ENCODE measurements at regions of chr4 and their contacts with region 1.

Region 1: GRCh38 chr4:40283968-40284367 is 51.2 kb upstream of the CHRNA9 start:
- DNase-seq: peak; percentile 94
- H3K4me3 Mint-ChIP-seq: peak overlapping the region; percentile 19
- H3K27ac Mint-ChIP-seq: peak overlapping the region; percentile 94
- H3K4me1 Mint-ChIP-seq: peaks cover 70% of the 10 kb centered on the region
- H3K27me3 Mint-ChIP-seq: no peaks in the 10 kb centered on the region

Region 2: GRCh38 chr4:39834269-39834668 is 449.7 kb before region 1 on chr4:
- CTCF ChIA-PET with region 1: no interaction called
- intact Hi-C with region 1: no loop called
- DNase-seq: no peak
- H3K4me3 Mint-ChIP-seq: no peak overlapping the region
- H3K27ac Mint-ChIP-seq: no peak overlapping the region
- H3K4me1 Mint-ChIP-seq: no peaks in the 10 kb centered on the region
- H3K27me3 Mint-ChIP-seq: no peaks in the 10 kb centered on the region

Region 3: GRCh38 chr4:40121515-40121914 is 162.5 kb before region 1 on chr4:
- CTCF ChIA-PET with region 1: no interaction called
- intact Hi-C with region 1: no loop called
- DNase-seq: peak; percentile 51
- H3K4me3 Mint-ChIP-seq: no peak overlapping the region
- H3K27ac Mint-ChIP-seq: peak overlapping the region; percentile 61
- H3K4me1 Mint-ChIP-seq: peaks cover 46% of the 10 kb centered on the region
- H3K27me3 Mint-ChIP-seq: no peaks in the 10 kb centered on the region

Region 4: DNA sequence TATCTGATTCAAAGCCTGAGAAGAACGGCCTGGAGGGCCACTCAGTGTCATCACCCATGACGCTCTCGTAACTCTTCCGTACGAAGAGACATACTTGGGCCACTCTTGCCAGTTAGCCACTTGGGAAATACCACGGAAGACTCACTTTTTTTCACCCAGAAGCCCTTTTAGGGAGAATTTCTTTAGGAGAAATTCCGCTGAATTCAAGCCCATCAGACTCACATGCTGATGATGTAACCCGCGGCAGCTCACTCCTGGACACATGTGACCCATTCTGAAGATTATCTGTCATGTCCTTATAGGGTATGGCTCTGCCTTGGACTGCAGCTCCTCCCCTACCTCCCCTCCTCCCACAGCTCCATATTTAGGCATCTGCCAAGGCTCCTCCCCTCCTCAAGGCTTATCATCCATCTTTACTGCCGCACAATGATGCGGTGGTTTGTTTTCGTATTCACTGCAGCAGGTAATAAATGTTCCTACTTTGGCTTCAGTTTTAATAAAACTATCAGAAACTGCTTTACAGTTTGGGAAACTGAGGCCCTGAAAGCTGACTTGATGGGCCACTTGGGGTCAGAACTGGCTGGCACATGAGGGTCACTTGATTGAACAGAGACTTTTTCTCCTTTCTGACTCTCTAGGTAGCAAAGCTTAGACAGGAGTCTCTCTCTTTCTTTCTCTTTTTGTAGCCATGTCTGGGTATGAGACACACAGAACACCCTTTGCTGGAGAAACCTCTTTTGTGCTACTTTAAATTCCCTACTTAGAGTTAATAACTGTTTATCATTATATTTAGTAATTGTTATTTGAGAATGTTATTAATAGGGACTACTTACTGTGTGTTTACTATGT is 45.0 kb before region 1 on chr4:
- CTCF ChIA-PET with region 1: interaction called, 3 read pairs
- intact Hi-C with region 1: loop called (anchors 1 kb)
- DNase-seq: peak; percentile 90
- H3K4me3 Mint-ChIP-seq: peak overlapping the region; percentile 74
- H3K27ac Mint-ChIP-seq: peak overlapping the region; percentile 89
- H3K4me1 Mint-ChIP-seq: peaks cover 91% of the 10 kb centered on the region
- H3K27me3 Mint-ChIP-seq: no peaks in the 10 kb centered on the region

Region 5: GRCh38 chr4:40255393-40256281 is 28.3 kb before region 1 on chr4:
- CTCF ChIA-PET with region 1: interaction called, 4 read pairs
- intact Hi-C with region 1: loop called (anchors 1 kb)
- DNase-seq: no peak
- H3K4me3 Mint-ChIP-seq: peak overlapping the region; percentile 0
- H3K27ac Mint-ChIP-seq: peak overlapping the region; percentile 75
- H3K4me1 Mint-ChIP-seq: peaks cover 77% of the 10 kb centered on the region
- H3K27me3 Mint-ChIP-seq: no peaks in the 10 kb centered on the region

Region 6: DNA sequence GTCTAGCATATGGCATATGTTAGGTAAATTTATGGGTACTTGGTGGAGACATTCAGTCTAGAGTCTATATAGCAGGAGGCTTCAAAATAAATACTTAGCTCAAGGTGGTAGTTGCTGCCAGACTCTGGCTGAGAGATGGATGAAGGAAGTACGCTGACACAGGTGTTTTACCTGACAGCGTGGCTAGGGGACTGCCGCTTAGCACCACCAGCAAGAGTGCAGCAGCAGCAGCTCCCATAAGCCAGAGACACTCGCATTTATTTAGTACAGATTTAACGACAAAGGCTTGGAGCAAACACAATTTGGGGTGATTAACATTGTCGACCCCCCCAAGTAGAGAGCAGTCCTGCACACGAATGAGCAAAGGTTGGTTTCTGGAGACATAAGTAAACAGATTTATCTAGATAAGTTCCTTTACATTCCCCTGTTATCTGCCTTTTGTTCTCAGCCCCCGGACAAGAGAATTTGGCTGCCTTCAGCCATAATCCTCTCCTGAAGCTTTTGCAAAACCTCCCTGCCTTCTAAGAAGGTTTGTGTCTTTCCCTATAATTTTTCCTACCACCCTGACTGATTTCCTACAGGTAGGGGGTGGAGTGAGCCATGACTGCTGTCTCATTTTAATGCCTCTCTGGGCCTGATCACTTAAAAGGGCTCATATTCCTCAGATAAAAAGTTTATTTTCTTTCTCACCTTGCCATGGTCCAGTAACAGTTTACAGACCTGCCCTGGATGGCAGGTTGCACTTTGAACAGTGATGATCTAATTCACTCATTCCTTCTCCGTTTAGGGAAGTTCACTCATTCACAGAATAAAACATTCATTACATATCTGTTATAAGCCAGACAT is 22.5 kb before region 1 on chr4:
- CTCF ChIA-PET with region 1: interaction called, 3 read pairs
- intact Hi-C with region 1: loop called (anchors 1 kb)
- DNase-seq: no peak
- H3K4me3 Mint-ChIP-seq: no peak overlapping the region
- H3K27ac Mint-ChIP-seq: peak overlapping the region; percentile 74
- H3K4me1 Mint-ChIP-seq: peaks cover 81% of the 10 kb centered on the region
- H3K27me3 Mint-ChIP-seq: no peaks in the 10 kb centered on the region

Region 7: DNA sequence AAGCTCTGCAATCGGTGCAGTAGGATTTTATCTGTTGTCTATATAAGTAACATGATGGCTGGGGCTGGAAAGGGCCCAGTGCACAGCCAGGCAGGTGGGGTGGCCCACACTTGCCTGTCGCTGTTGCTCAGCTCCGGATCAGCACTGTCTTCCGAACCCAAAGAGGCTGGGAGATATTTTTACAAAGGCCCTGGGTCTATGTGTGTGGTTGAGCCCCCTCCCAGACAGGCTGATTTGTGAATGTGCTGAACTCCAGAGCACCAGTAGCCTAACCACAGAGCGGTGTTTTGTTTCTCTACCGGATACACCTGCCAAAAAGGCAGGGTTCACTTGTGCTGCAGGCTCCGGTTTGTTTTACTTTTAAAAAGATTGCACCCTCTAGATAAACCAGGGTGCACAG is 17.6 kb after region 1 on chr4:
- CTCF ChIA-PET with region 1: interaction called, 18 read pairs
- intact Hi-C with region 1: loop called (anchors 1 kb)
- DNase-seq: peak; percentile 73
- H3K4me3 Mint-ChIP-seq: peak overlapping the region; percentile 57
- H3K27ac Mint-ChIP-seq: peak overlapping the region; percentile 88
- H3K4me1 Mint-ChIP-seq: peaks cover 84% of the 10 kb centered on the region
- H3K27me3 Mint-ChIP-seq: no peaks in the 10 kb centered on the region

Region 8: DNA sequence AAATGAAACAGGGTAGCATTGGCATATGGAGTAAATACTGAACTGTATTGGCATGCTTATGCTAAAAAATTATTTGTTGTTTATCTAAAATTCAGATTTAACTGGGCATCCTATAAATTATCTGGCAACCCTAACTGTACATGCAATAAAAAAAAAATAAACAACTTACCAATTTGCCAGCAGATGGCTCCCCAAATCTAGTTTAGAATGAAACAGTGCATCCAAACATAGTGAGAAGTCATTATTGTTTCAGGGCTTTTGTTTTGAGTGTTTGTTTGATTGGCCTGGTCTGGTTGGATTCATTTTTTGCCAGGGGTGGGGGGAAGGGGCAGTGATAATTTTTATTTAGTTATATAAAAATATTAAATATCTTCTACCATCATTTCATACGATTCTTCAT is 452.9 kb after region 1 on chr4:
- CTCF ChIA-PET with region 1: no interaction called
- intact Hi-C with region 1: no loop called
- DNase-seq: peak; percentile 18
- H3K4me3 Mint-ChIP-seq: no peak overlapping the region
- H3K27ac Mint-ChIP-seq: no peak overlapping the region
- H3K4me1 Mint-ChIP-seq: peaks cover 9% of the 10 kb centered on the region
- H3K27me3 Mint-ChIP-seq: peaks cover 2% of the 10 kb centered on the region